HEK293T (cell line): ENCODE measurements at regions of chr6 and their contacts with region 1.

Region 1: GRCh38 chr6:124961777-124962611 is at the start of gene RNF217:
- DNase-seq: peak; percentile 71

Region 2: DNA sequence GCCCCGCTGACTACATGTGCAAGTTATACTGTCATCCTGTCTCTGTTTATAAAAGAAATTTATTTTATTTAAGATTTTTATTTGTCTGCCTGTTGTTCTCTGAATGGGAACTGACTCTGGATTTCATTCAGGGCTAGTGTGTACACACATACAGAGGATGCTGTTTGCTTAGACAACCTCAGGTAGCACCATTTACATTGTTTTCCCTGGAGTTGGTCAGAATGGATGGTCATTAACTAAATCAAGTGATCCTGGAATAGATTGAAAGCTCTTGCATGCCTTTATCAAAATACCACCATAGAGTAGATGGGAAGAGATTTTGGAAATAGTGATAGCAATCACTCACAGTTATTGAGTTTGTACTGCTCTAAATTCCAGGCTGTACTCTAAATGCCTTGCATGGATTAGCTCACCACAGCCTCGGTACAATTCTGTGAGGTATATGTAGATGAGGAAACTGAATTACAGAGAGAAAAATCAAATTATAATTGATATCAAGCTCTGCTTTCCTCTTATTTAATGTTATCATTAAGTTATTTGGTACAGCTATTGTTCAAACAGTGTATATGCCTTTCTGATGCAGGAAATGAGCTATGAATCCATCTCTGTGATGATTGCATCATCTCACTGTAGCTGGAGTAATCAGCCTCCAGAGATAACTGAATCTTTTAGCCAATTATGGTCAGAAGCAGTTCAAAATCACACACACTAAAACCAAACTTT is 52.1 kb after region 1 on chr6:
- CTCF ChIA-PET with region 1: no interaction called
- POLR2A ChIA-PET with region 1: interaction called, 10 read pairs
- DNase-seq: no peak